Psoas muscle (tissue), 8 donors: ENCODE measurements at regions of chr3 and their contacts with region 1.

Region 1: DNA sequence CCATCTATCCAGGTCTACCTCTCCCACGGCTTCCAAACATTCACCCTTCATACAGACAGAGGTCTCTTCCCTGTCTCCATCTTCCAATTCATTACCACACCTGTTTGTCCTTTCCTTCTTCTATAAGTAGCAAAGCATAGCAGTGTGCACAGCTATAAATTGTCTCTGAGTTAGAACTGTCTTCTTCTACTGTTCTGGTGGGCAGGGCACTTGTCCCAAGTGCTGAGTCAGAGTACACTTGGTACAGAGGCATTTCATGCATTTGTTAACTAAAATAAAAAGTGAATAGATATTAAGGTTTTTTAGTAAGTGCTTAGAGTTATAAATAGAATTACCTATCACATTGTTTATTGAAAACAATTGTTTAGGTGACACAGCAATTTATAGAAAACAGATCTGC is 150.1 kb upstream of the CCDC54 start:
- DNase-seq: no peak
- ATAC-seq: no peak
- H3K4me3 ChIP-seq: no peak overlapping the region
- H3K27ac ChIP-seq: no peak overlapping the region
- H3K4me1 ChIP-seq: peaks cover 4% of the 10 kb centered on the region
- H3K27me3 ChIP-seq: no peaks in the 10 kb centered on the region
- CTCF ChIP-seq: no peak

Region 2: DNA sequence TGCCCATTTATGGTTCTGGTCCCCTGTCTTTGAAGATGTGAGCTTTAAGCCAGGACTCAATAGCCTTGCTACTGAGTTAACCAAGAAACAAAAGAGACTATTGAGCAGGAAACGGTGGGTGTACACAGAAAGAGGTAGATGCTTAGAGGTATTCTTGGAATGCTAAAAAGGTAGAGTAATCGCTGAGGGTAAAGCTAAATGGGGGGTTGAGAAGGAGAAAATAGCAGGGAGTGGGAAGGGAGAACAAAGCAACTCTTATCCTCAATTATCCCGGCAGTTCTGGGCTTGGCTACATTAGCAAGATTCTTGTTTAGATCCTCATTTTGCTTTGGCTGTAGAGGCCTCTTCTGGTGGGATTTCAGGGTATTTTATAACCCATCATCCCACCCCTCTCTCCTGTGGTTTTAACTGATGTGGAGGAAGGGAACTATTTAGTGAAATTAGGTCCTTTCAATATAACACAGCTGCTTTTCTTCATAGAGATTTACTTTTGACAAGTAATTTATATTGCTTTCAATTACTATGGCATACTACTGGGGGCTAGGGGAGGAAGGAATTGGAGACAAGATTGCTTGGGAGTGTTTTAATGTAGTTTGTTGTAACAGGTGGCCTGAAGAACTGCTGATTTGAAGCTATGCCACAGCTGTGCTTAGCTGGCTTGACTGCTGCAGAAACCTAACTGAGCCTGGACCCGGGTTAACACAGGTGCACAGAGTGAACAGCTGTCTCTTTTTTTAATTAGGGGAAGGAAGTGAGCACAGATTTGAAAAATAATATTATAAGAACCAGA is 84.1 kb before region 1 on chr3:
- intact Hi-C with region 1: no loop called
- DNase-seq: no peak
- ATAC-seq: no peak
- H3K4me3 ChIP-seq: no peak overlapping the region
- H3K27ac ChIP-seq: no peak overlapping the region
- H3K4me1 ChIP-seq: no peaks in the 10 kb centered on the region
- H3K27me3 ChIP-seq: no peaks in the 10 kb centered on the region
- CTCF ChIP-seq: no peak

Region 3: GRCh38 chr3:107837895-107838612 is 611.0 kb after region 1 on chr3:
- intact Hi-C with region 1: loop called in 1 of 2 experiments (anchors 5 kb)
- DNase-seq: no peak
- ATAC-seq: no peak
- H3K4me3 ChIP-seq: no peak overlapping the region
- H3K27ac ChIP-seq: no peak overlapping the region
- H3K4me1 ChIP-seq: no peaks in the 10 kb centered on the region
- H3K27me3 ChIP-seq: no peaks in the 10 kb centered on the region
- CTCF ChIP-seq: no peak